Heart right ventricle (tissue), 16 donors: ENCODE measurements at regions of chr13 and their contacts with region 1.

Region 1: GRCh38 chr13:94233401-94233800 is 246.1 kb downstream of the DCT start:
- DNase-seq: peak in 1 of 2 donors; percentile 7
- ATAC-seq: peak in 2 of 8 donors; percentile 52 to 86
- H3K4me3 ChIP-seq: no peak overlapping the region
- H3K27ac ChIP-seq: peak overlapping the region in 1 of 10 donors; percentile 15
- H3K4me1 ChIP-seq: peaks cover 0 to 14% (median 0%) of the 10 kb centered on the region in 9 donors
- H3K27me3 ChIP-seq: no peaks in the 10 kb centered on the region
- CTCF ChIP-seq: no peak

Region 2: DNA sequence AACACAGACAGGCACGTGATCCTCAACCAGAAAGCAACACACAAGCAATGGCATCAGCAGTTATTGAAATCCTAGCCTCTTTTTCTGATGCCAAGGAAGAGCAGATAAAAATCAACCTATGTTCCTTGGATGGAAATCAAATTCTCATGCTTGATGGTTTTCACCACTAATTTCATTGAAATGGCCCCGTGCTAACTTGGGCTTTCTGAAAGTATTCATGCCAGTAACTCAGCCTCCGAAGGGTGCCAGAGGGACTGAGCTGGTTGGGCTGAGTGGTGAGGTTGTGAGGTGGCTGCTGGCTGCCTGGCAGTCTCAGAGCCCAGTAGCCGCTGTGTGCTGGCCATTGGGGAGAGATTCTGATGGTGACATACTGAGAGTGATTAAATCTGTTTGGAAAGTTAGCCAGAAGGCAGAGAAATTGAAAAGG is 63.2 kb before region 1 on chr13:
- intact Hi-C with region 1: no loop called
- DNase-seq: peak in 1 of 2 donors; percentile 26
- ATAC-seq: peak in 3 of 8 donors; percentile 42 to 84 (median 49)
- H3K4me3 ChIP-seq: no peak overlapping the region
- H3K27ac ChIP-seq: peak overlapping the region in 1 of 10 donors; percentile 17
- H3K4me1 ChIP-seq: peaks cover 0 to 12% (median 0%) of the 10 kb centered on the region in 9 donors
- H3K27me3 ChIP-seq: no peaks in the 10 kb centered on the region
- CTCF ChIP-seq: no peak

Region 3: DNA sequence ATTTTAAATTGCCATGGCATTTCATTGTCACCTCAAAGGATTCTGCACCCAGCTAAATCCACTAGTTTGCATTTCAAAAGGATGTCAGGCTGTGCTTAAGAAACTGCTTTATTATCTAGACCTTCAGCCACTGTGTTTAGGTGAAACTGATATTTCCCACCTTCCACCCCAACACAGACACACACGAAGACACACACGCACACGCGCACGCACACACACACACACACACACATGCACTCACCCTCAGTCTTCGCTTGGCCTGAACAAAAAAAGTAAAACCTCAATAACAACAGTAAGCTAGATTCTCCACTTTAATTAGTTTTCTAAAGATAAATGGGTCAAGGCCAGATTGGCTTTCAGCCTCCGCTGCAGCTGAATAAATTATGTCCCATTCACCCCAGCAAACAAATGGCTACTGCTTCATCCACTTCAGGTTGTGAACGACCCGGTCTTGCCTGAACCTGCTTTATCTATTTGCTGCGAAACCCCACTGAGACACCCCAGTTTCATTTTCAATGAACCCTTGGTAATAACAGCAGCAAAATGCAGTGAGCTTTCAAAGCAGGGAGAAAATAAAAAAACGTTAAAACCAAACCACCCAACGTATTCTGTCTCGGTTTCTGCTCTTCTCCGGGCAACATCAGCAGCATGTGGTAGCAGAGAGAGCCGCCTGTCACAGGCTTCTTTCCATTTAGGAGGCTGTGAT is 79.3 kb after region 1 on chr13:
- intact Hi-C with region 1: loop called in 1 of 10 experiments (anchors 10 kb)
- DNase-seq: no peak
- ATAC-seq: peak in 3 of 8 donors; percentile 21 to 31 (median 22)
- H3K4me3 ChIP-seq: no peak overlapping the region
- H3K27ac ChIP-seq: peak overlapping the region in 4 of 10 donors; percentile 9 to 45 (median 26)
- H3K4me1 ChIP-seq: peaks cover 0 to 25% (median 6%) of the 10 kb centered on the region in 9 donors
- H3K27me3 ChIP-seq: no peaks in the 10 kb centered on the region
- CTCF ChIP-seq: no peak